ENCODE measurements at regions of chr21 and their contacts with region 1.

Region 1: GRCh38 chr21:42309753-42310221 is 5.4 kb downstream of the TFF3 start:
- DNase-seq: peak; percentile 61 to 85 (median 67)
- ATAC-seq: peak; percentile 86
- H3K4me3 ChIP-seq: no peak overlapping the region
- H3K4me3 Mint-ChIP-seq: no peak overlapping the region
- H3K27ac ChIP-seq: no peak overlapping the region
- H3K27ac Mint-ChIP-seq: no peak overlapping the region
- H3K4me1 ChIP-seq: peaks cover 18% of the 10 kb centered on the region
- H3K4me1 Mint-ChIP-seq: peaks cover 15% of the 10 kb centered on the region
- H3K27me3 ChIP-seq: peaks cover 9 to 11% of the 10 kb centered on the region in 2 experiments
- H3K27me3 Mint-ChIP-seq: peaks cover 12% of the 10 kb centered on the region
- CTCF ChIP-seq: peak; percentile 80

Region 2: GRCh38 chr21:41847066-41847804 is 462.6 kb before region 1 on chr21:
- CTCF ChIA-PET with region 1: no interaction called
- POLR2A ChIA-PET with region 1: no interaction called
- intact Hi-C with region 1: no loop called
- DNase-seq: no peak
- ATAC-seq: no peak
- H3K4me3 ChIP-seq: no peak overlapping the region
- H3K4me3 Mint-ChIP-seq: no peak overlapping the region
- H3K27ac ChIP-seq: no peak overlapping the region
- H3K27ac Mint-ChIP-seq: no peak overlapping the region
- H3K4me1 ChIP-seq: no peaks in the 10 kb centered on the region
- H3K4me1 Mint-ChIP-seq: no peaks in the 10 kb centered on the region
- H3K27me3 ChIP-seq: no peaks in the 10 kb centered on the region
- H3K27me3 Mint-ChIP-seq: no peaks in the 10 kb centered on the region
- CTCF ChIP-seq: no peak

Region 3: DNA sequence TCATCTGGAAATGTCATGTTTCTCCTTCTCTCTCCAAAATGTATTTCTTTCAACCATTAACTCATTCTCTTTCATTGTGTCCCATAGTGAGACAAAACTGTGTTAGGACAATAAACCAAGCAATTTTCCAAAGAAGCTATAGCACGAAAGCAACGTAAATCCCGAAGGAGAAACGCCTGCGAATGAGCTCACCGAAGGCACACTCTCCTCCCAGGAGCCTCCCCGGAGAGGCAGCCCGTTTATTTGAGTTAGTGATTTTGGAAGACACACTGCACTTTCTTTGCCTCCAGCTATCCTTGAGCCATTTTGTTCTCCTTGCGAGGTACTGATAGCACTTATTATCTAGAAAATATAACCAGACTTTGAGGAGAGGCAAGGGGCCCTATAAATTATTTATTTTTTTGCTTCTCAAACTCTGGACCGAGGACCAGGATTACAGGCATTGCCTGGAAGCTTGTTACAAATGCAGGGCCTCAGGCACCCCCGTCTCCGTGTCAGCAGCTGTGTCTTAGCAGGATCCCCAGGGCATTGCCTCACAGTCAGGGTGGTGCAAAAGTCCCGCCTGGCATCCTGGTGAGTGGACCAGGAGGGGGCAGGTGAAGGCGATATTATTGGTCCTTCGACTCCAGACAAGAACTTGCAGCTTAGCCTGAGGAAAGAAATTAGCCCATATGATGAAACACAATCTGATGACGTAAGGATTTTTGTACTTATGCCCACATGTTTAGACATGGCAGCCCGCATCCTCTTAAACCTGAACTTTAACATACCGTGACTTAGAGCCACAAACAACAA is 145.2 kb after region 1 on chr21:
- CTCF ChIA-PET with region 1: interaction called, 3 read pairs
- POLR2A ChIA-PET with region 1: no interaction called
- intact Hi-C with region 1: loop called in 1 of 2 experiments (anchors 1 kb)
- DNase-seq: no peak
- ATAC-seq: no peak
- H3K4me3 ChIP-seq: no peak overlapping the region
- H3K4me3 Mint-ChIP-seq: no peak overlapping the region
- H3K27ac ChIP-seq: no peak overlapping the region
- H3K27ac Mint-ChIP-seq: peak overlapping the region; percentile 79
- H3K4me1 ChIP-seq: peaks cover 25% of the 10 kb centered on the region
- H3K4me1 Mint-ChIP-seq: peaks cover 32% of the 10 kb centered on the region
- H3K27me3 ChIP-seq: no peaks in the 10 kb centered on the region
- H3K27me3 Mint-ChIP-seq: no peaks in the 10 kb centered on the region
- CTCF ChIP-seq: no peak

Measured in CD4-positive, alpha-beta T cell (primary cell).